ENCODE measurements at regions of chr14 and their contacts with region 1.

Region 1: GRCh38 chr14:68816262-68816942 is 23.5 kb upstream of the ZFP36L1 start:
- DNase-seq: peak; percentile 95
- ATAC-seq: peak; percentile 95

Region 2: GRCh38 chr14:67934008-67934481 is 882.4 kb before region 1 on chr14:
- intact Hi-C with region 1: loop called (anchors 10 kb)
- DNase-seq: no peak
- ATAC-seq: peak; percentile 95

Region 3: GRCh38 chr14:68884031-68885030 is 67.9 kb after region 1 on chr14:
- intact Hi-C with region 1: no loop called
- DNase-seq: peak; percentile 68
- ATAC-seq: peak; percentile 88